ENCODE measurements at regions of chr12 and their contacts with region 1.

Region 1: DNA sequence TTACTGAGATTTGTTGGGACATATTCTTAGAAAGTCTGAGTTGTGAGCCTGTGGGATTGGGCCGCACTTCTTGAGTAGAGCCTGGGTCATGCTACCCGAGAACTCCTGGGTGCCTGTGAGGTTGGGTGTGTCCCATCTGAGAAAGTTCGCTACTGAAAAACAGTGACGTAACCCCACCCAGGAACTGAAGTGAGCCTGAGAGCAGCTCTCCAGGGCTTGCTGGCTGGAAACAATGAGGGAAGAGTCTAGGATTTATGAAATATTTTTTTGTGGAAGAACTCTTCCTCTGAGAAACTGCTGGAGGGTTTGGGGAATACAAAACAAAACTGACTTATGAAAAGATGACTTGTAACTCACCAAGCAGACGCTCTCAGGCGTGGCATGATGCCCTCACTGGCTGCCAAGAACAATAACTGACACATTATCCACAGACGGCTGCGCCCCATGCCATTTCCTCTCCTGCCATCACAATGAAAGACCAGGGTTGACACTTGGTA is 69.2 kb downstream of the RASSF3 start:
- DNase-seq: peak; percentile 79
- ATAC-seq: peak; percentile 59
- H3K4me3 Mint-ChIP-seq: peak overlapping the region; percentile 53
- H3K27ac Mint-ChIP-seq: peak overlapping the region; percentile 91
- H3K4me1 Mint-ChIP-seq: peaks cover 96% of the 10 kb centered on the region
- H3K27me3 Mint-ChIP-seq: no peaks in the 10 kb centered on the region

Region 2: GRCh38 chr12:64451687-64452558 is 227.6 kb before region 1 on chr12 and contains the start of gene TBK1:
- CTCF ChIA-PET with region 1: no interaction called
- POLR2A ChIA-PET with region 1: no interaction called
- intact Hi-C with region 1: loop called in 1 of 2 experiments (anchors 5 kb)
- DNase-seq: peak; percentile 75
- ATAC-seq: peak; percentile 64
- H3K4me3 Mint-ChIP-seq: peak within 1 kb of the TSS; percentile 89
- H3K27ac Mint-ChIP-seq: peak within 1 kb of the TSS; percentile 98
- H3K4me1 Mint-ChIP-seq: peaks cover 40% of the 10 kb centered on the region
- H3K27me3 Mint-ChIP-seq: no peaks in the 10 kb centered on the region
- total RNA-seq, gene TBK1: 14.0 to 15.4 TPM

Region 3: GRCh38 chr12:64625243-64626077 is 54.1 kb before region 1 on chr12:
- CTCF ChIA-PET with region 1: interaction called, 4 read pairs
- POLR2A ChIA-PET with region 1: interaction called, 4 read pairs
- intact Hi-C with region 1: loop called in 1 of 2 experiments (anchors 2 kb)
- DNase-seq: peak; percentile 58
- ATAC-seq: peak; percentile 93
- H3K4me3 Mint-ChIP-seq: peak overlapping the region; percentile 68
- H3K27ac Mint-ChIP-seq: peak overlapping the region; percentile 97
- H3K4me1 Mint-ChIP-seq: peaks cover 72% of the 10 kb centered on the region
- H3K27me3 Mint-ChIP-seq: no peaks in the 10 kb centered on the region

Region 4: GRCh38 chr12:64669270-64669842 is 10.2 kb before region 1 on chr12:
- CTCF ChIA-PET with region 1: interaction called, 23 read pairs
- POLR2A ChIA-PET with region 1: interaction called, 5 read pairs
- intact Hi-C with region 1: loop called (anchors 1 kb)
- DNase-seq: peak; percentile 49
- ATAC-seq: peak; percentile 78
- H3K4me3 Mint-ChIP-seq: peak overlapping the region; percentile 82
- H3K27ac Mint-ChIP-seq: peak overlapping the region; percentile 98
- H3K4me1 Mint-ChIP-seq: peaks cover 93% of the 10 kb centered on the region
- H3K27me3 Mint-ChIP-seq: no peaks in the 10 kb centered on the region

Region 5: DNA sequence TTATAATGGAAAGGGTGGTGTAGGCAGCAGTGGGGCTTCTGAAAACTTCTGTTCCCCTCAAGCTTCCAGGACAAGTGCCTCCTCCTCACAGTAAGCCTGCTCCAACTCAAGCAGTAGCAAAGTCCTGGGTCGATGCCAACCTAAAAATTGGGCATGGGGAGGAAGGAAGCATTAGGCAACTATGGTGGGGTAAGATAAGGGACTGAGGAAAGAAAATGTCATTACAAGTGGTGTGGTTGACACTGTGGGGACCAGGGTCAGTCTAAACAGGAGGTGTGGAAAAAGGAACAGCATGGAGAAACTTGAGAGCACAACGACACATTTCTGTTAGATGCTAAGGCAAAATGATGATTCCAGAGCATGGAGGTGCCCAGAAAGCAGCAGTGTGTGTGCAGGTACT is 406.7 kb after region 1 on chr12:
- CTCF ChIA-PET with region 1: no interaction called
- POLR2A ChIA-PET with region 1: no interaction called
- intact Hi-C with region 1: no loop called
- DNase-seq: no peak
- ATAC-seq: no peak
- H3K4me3 Mint-ChIP-seq: no peak overlapping the region
- H3K27ac Mint-ChIP-seq: no peak overlapping the region
- H3K4me1 Mint-ChIP-seq: no peaks in the 10 kb centered on the region
- H3K27me3 Mint-ChIP-seq: peaks cover 23% of the 10 kb centered on the region